Activated CD4-positive, alpha-beta T cell treated with anti-CD3 and anti-CD28 coated beads for 36 hours (primary cell): ENCODE measurements at regions of chr1 and their contacts with region 1.

Region 1: GRCh38 chr1:183956559-183957188 is 80.9 kb downstream of the COLGALT2 start:
- DNase-seq: peak; percentile 67
- ATAC-seq: peak; percentile 99
- H3K4me3 Mint-ChIP-seq: no peak overlapping the region
- H3K27ac Mint-ChIP-seq: peak overlapping the region; percentile 77
- H3K4me1 Mint-ChIP-seq: peaks cover 7% of the 10 kb centered on the region
- H3K27me3 Mint-ChIP-seq: no peaks in the 10 kb centered on the region

Region 2: DNA sequence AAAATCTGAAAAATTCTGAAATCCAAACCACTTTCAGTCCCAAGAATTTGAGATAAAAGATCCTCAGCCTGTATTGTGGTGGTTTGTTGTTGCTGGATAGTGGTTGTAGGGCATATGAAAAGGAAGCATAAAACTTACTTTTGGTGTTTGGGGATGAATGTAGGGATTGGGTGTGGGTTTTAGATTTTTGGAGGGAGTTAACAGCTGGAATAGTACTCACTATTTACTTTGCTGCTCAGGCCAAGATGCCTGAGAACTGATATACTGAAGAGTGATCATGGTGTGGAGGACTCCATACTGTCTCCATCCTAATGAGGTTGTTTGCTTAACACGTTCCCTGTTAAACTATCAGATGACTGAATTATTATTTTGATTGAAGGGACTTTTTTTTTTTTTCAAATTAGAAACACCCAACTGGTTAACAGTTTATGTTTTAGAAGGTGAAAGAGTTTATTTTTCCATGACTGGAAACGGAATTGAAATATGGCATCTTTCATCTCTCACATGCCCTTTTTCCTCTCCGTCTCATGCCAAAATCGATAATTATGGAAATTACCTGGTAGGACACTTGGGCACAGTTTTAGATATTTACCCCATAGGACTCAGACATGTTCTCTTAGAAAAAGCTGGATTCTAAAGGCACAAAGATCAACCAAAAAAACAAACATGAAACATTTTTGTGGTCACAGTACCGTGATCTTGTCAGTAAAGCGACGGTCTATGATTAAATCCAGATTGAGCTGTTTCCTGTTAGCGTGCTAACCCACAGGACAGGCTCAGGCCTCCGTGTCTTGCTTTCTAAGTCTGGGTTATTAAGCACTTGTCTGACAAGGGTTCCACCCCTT is 114.5 kb before region 1 on chr1:
- CTCF ChIA-PET with region 1: no interaction called
- POLR2A ChIA-PET with region 1: no interaction called
- intact Hi-C with region 1: loop called in 1 of 2 experiments (anchors 1 kb)
- DNase-seq: peak; percentile 34
- ATAC-seq: peak; percentile 83
- H3K4me3 Mint-ChIP-seq: peak overlapping the region; percentile 6
- H3K27ac Mint-ChIP-seq: peak overlapping the region; percentile 84
- H3K4me1 Mint-ChIP-seq: peaks cover 25% of the 10 kb centered on the region
- H3K27me3 Mint-ChIP-seq: no peaks in the 10 kb centered on the region

Region 3: DNA sequence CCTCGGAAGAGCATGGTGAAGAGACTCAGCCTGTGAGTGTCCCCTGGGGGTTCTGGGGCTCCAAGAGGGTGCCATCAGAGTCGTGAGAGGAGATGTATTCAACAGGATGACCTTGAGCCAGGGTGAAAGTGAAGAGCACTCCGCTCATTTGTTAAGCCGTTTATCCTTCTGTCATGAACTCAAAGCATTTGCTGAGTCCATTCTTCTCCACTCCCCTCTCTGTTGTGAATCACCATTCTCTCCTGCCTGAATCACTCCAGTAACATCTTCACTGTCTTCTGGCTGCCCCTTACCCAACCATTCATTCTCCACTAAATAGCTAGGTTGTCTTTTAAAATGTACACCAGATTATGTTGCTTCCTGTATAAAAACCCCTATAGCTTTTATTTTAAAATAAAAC is 49.6 kb before region 1 on chr1:
- CTCF ChIA-PET with region 1: no interaction called
- POLR2A ChIA-PET with region 1: no interaction called
- intact Hi-C with region 1: no loop called
- DNase-seq: no peak
- ATAC-seq: no peak
- H3K4me3 Mint-ChIP-seq: no peak overlapping the region
- H3K27ac Mint-ChIP-seq: no peak overlapping the region
- H3K4me1 Mint-ChIP-seq: peaks cover 17% of the 10 kb centered on the region
- H3K27me3 Mint-ChIP-seq: no peaks in the 10 kb centered on the region

Region 4: GRCh38 chr1:184036517-184036949 is 79.9 kb after region 1 on chr1:
- CTCF ChIA-PET with region 1: no interaction called
- POLR2A ChIA-PET with region 1: no interaction called
- intact Hi-C with region 1: loop called in 1 of 2 experiments (anchors 5 kb)
- DNase-seq: peak; percentile 24
- ATAC-seq: peak; percentile 5
- H3K4me3 Mint-ChIP-seq: peak overlapping the region; percentile 61
- H3K27ac Mint-ChIP-seq: no peak overlapping the region
- H3K4me1 Mint-ChIP-seq: peaks cover 9% of the 10 kb centered on the region
- H3K27me3 Mint-ChIP-seq: peaks cover 56% of the 10 kb centered on the region

Region 5: GRCh38 chr1:184051485-184052193 is 95.0 kb after region 1 on chr1 and contains the start of gene TSEN15:
- CTCF ChIA-PET with region 1: no interaction called
- POLR2A ChIA-PET with region 1: no interaction called
- intact Hi-C with region 1: loop called (anchors 1 to 2 kb)
- DNase-seq: peak; percentile 89
- ATAC-seq: peak; percentile 97
- H3K4me3 Mint-ChIP-seq: peak within 1 kb of the TSS; percentile 93
- H3K27ac Mint-ChIP-seq: peak within 1 kb of the TSS; percentile 99
- H3K4me1 Mint-ChIP-seq: peaks cover 33% of the 10 kb centered on the region
- H3K27me3 Mint-ChIP-seq: peaks cover 9% of the 10 kb centered on the region
- total RNA-seq, gene TSEN15: 44.1 to 47.3 TPM

Region 6: GRCh38 chr1:184222652-184223052 is 266.0 kb after region 1 on chr1:
- CTCF ChIA-PET with region 1: no interaction called
- POLR2A ChIA-PET with region 1: no interaction called
- intact Hi-C with region 1: loop called in 1 of 2 experiments (anchors 10 kb)
- DNase-seq: peak; percentile 62
- ATAC-seq: no peak
- H3K4me3 Mint-ChIP-seq: no peak overlapping the region
- H3K27ac Mint-ChIP-seq: no peak overlapping the region
- H3K4me1 Mint-ChIP-seq: no peaks in the 10 kb centered on the region
- H3K27me3 Mint-ChIP-seq: no peaks in the 10 kb centered on the region

Region 7: DNA sequence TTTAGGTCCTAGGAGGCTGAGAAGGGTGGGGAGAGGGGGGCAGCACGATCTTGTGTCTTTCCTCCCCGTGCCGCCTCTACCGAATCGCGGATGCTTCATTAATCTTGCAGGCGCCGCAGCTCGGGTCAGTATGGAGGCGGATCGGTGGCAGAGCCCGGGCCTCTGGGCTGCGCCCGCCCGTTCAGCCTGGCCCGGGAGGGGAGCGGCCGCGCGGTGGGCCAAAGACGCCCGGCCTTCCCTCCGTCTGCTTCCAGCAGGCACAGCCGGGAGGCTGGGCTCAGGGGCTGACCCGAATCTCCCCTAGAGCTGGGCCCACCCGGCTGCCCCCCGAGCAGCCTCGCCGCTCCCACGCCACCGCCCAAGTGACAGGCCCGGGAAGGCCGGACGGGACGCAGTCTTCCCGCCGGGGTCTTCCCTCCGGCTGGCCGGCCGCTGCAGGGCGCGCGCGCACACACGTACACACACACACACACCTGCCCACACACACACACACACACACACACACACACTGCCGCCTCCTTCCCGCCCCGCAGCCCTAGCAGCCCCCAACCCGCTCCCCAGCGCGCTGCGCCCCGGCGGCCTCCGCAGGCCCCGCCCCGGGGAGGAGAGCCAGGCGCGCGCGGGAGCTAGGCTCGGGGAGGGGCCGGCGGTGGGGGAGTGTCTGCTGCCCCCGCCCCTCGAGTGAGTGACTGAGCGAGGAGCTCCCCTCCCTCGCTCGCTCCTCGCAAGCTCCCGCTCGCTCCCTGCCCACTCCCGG is 429.8 kb after region 1 on chr1 and contains the start of gene C1orf21:
- CTCF ChIA-PET with region 1: no interaction called
- POLR2A ChIA-PET with region 1: no interaction called
- intact Hi-C with region 1: loop called in 1 of 2 experiments (anchors 5 kb)
- DNase-seq: peak; percentile 89
- ATAC-seq: peak; percentile 95
- H3K4me3 Mint-ChIP-seq: peak within 1 kb of the TSS; percentile 66
- H3K27ac Mint-ChIP-seq: peak within 1 kb of the TSS; percentile 38
- H3K4me1 Mint-ChIP-seq: peaks cover 12% of the 10 kb centered on the region
- H3K27me3 Mint-ChIP-seq: peaks cover 44% of the 10 kb centered on the region
- total RNA-seq, gene C1orf21: 2.6 to 6.1 TPM

Region 8: GRCh38 chr1:184892116-184892515 is 935.4 kb after region 1 on chr1:
- CTCF ChIA-PET with region 1: no interaction called
- POLR2A ChIA-PET with region 1: no interaction called
- intact Hi-C with region 1: loop called in 1 of 2 experiments (anchors 10 kb)
- DNase-seq: peak; percentile 48
- ATAC-seq: peak; percentile 74
- H3K4me3 Mint-ChIP-seq: no peak overlapping the region
- H3K27ac Mint-ChIP-seq: peak overlapping the region; percentile 67
- H3K4me1 Mint-ChIP-seq: peaks cover 52% of the 10 kb centered on the region
- H3K27me3 Mint-ChIP-seq: no peaks in the 10 kb centered on the region